MCF 10A (cell line): ENCODE measurements at regions of chr5 and their contacts with region 1.

Region 1: DNA sequence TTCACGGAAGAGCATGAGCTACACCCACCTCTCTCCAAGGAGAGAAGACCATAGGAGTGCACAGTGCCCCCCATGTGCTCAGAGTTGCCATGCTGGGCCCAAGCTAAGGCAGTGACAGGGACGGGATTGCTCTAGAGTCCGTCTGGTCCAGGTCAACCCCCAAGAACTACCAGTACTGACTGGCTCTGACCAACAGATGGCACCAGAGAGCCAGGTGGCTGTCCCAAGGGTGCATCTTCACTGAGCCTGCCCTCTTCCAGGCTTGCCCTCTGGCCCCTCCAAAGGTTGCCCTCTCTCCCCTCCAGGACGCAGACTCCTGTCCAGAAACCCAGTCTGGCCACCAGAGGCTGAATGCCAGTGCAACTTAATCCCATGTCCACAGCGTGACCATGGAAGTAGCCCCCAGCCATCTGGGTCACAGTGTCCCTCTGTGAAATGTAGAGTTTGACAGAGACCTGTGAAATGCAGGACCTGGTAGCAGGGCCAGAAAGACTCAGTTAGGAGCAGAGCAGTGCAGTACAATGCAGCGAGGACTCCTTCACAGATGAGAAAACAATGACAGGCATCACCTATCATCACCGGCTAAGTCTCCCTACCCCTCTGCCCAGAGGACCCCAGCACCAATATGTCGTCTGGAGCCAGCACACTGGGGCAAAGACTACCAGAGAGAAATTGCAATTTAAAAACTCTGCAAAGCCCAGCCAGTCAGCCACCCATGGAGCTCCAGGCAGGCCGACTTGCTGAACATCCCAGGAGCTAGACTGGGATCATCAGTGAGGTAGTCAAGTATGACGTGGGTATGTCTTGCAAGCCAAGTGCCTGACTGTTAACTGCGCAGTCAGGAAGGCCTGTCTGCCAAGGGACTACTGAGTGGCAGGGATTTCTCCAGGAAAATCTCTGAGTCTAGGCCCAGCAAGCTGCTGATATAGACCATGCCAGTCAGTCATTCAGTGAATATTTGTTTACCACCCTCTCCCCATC is 7.7 kb upstream of the SKP1 start:
- DNase-seq: peak; percentile 87
- H3K4me3 Mint-ChIP-seq: no peak overlapping the region
- H3K27ac Mint-ChIP-seq: no peak overlapping the region
- H3K4me1 Mint-ChIP-seq: no peaks in the 10 kb centered on the region
- H3K27me3 Mint-ChIP-seq: no peaks in the 10 kb centered on the region
- CTCF ChIP-seq: peak; percentile 99

Region 2: GRCh38 chr5:134195666-134196065 is 11.2 kb after region 1 on chr5:
- CTCF ChIA-PET with region 1: interaction called, 38 read pairs
- POLR2A ChIA-PET with region 1: interaction called, 4 read pairs
- intact Hi-C with region 1: no loop called
- DNase-seq: no peak
- H3K4me3 Mint-ChIP-seq: no peak overlapping the region
- H3K27ac Mint-ChIP-seq: no peak overlapping the region
- H3K4me1 Mint-ChIP-seq: no peaks in the 10 kb centered on the region
- H3K27me3 Mint-ChIP-seq: no peaks in the 10 kb centered on the region
- CTCF ChIP-seq: no peak

Region 3: DNA sequence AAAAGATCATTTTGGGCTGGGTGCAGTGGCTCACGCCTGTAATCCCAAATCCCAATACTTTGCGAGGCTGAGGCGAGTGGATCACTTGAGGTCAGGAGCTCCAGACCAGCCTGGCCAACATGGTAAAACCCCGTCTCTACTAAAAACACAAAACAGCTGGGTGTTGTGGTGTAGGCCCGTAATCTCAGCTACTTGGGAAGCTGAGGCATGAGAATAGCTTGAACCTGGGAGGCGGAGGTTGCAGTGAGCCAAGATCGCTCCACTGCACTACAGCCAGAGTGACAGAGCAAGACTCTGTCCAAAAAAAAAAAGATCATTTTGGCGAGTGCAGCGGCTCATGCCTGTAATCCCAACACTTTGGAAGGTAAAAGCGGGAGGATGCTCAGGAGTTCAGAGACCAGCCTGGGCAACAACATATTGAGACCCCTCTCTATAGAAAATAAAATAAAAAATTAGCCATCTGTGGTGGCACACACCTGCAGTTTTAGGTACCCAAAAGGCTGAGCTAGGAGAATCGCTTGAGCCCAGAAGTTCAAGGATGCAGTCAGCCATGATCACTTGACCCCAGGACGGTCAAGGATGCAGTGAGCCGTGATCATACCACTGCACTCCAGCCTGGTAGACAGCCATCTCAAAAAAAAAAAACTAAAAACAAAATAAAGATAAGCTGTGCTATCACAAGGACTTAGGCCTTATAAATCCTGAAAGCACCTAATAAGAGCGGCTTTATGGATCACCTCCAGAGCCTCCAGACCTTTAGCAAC is 25.2 kb after region 1 on chr5:
- CTCF ChIA-PET with region 1: interaction called, 20 read pairs
- POLR2A ChIA-PET with region 1: interaction called, 4 read pairs
- intact Hi-C with region 1: no loop called
- DNase-seq: no peak
- H3K4me3 Mint-ChIP-seq: no peak overlapping the region
- H3K27ac Mint-ChIP-seq: no peak overlapping the region
- H3K4me1 Mint-ChIP-seq: peaks cover 15% of the 10 kb centered on the region
- H3K27me3 Mint-ChIP-seq: no peaks in the 10 kb centered on the region
- CTCF ChIP-seq: no peak

Region 4: DNA sequence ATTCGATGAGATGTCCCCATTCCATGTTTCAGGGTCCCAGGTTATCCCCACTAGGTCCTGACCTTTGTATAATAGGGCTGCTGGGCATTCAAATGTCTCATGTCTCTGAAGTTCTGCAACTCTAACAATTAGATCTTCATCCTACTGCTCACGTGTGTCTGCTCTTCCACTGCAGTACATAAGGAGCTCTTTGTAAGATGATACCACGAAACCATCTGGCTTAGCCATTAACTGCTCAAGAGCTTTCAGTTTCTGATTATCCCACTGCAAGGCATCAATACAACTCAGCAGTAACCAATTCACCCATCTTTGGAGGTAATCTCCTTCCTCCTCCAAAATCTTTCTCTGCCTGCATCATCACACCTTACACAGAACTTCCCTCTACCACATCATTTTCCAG is 91.4 kb after region 1 on chr5:
- CTCF ChIA-PET with region 1: interaction called, 24 read pairs
- POLR2A ChIA-PET with region 1: interaction called, 3 read pairs
- intact Hi-C with region 1: no loop called
- DNase-seq: no peak
- H3K4me3 Mint-ChIP-seq: no peak overlapping the region
- H3K27ac Mint-ChIP-seq: no peak overlapping the region
- H3K4me1 Mint-ChIP-seq: peaks cover 14% of the 10 kb centered on the region
- H3K27me3 Mint-ChIP-seq: no peaks in the 10 kb centered on the region
- CTCF ChIP-seq: no peak

Region 5: GRCh38 chr5:134289509-134290113 is 105.2 kb after region 1 on chr5:
- CTCF ChIA-PET with region 1: interaction called, 425 read pairs
- POLR2A ChIA-PET with region 1: interaction called, 59 read pairs
- intact Hi-C with region 1: loop called (anchors 1 kb)
- DNase-seq: peak; percentile 89
- H3K4me3 Mint-ChIP-seq: no peak overlapping the region
- H3K27ac Mint-ChIP-seq: no peak overlapping the region
- H3K4me1 Mint-ChIP-seq: no peaks in the 10 kb centered on the region
- H3K27me3 Mint-ChIP-seq: peaks cover 17% of the 10 kb centered on the region
- CTCF ChIP-seq: peak; percentile 95